Dorsolateral prefrontal cortex (tissue), 120 donors: ENCODE measurements at regions of chr16 and their contacts with region 1.

Region 1: DNA sequence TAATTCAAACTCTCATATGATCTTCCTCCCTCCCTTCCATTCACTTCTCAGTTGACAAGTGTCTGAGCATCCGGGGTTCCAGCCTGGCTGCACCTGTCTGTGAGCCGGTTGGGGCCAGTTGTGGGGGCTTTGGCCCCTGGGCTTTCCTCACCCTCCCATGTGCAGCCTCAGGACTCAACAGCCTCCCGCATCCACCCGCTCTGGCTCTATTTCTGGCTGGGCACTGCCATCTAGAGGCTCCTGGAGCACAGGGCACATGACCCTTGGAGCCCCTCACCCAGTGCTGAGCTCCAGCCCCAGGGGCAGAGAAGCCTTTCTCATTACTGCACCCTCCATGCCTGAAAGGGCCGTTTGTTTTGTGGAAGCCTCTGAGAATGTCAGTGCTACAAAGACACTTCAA is 43.3 kb downstream of the HAPSTR1 start:
- DNase-seq: peak in 5 of 10 donors; percentile 30 to 62 (median 39)
- H3K4me3 ChIP-seq: no peak overlapping the region
- H3K27ac ChIP-seq: no peak overlapping the region
- H3K27me3 ChIP-seq: no peaks in the 10 kb centered on the region
- CTCF ChIP-seq: peak in 53 of 56 donors; percentile 35 to 74 (median 53)

Region 2: DNA sequence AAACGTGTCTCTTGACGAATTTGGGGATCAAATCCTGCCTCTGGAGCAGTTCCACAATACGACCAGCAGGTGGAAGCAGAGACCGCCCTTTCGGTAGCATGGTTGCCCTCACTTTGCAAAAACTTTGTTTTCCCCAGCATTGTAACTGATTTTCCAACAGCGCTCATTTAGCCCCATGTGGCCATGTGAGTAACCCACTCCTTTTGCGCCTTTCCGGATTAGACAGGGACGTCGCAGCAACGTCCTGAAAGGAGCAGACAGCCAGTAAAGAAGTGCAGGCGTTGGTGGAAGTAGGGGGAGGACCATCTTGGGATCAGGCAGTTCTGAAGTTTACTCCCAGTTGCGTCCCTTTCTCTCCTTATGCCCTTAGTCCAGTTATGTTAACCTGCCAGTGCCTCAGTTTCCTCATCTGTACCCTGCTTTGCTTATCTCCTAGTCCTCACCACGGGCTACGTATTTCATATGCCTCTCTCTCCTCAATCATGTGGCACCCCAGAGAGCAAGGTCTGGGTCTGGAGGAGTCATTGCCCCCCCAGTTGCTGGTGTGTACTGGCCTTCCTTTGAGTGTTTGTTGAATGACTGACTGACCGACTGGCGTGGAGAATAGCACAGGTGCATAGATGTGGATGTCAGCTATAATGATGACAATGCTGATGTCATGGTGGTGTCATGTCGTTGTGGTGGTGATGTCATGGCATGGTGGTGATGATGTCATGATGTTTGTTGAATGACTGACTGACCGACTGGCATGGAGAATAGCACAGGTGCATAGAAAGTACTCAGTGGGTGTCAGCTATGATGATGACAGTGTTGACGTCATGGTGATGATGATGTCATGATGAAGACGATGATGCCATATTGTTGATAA is 566.8 kb before region 1 on chr16:
- intact Hi-C with region 1: loop called in 1 of 2 experiments (anchors 10 kb)
- DNase-seq: peak; percentile 45 to 81 (median 67)
- H3K4me3 ChIP-seq: no peak overlapping the region
- H3K27ac ChIP-seq: no peak overlapping the region
- H3K27me3 ChIP-seq: no peaks in the 10 kb centered on the region
- CTCF ChIP-seq: peak; percentile 97 to 100 (median 99)

Region 3: GRCh38 chr16:8660841-8661301 is 473.9 kb before region 1 on chr16:
- intact Hi-C with region 1: loop called in 1 of 2 experiments (anchors 10 kb)
- DNase-seq: peak in 9 of 10 donors; percentile 45 to 82 (median 67)
- H3K4me3 ChIP-seq: peak overlapping the region in 2 of 59 donors; percentile 9 to 39
- H3K27ac ChIP-seq: no peak overlapping the region
- H3K27me3 ChIP-seq: no peaks in the 10 kb centered on the region
- CTCF ChIP-seq: peak; percentile 41 to 87 (median 68)